Activated CD4-positive, alpha-beta T cell treated with anti-CD3 and anti-CD28 coated beads for 36 hours (primary cell): ENCODE measurements at regions of chr7 and their contacts with region 1.

Region 1: DNA sequence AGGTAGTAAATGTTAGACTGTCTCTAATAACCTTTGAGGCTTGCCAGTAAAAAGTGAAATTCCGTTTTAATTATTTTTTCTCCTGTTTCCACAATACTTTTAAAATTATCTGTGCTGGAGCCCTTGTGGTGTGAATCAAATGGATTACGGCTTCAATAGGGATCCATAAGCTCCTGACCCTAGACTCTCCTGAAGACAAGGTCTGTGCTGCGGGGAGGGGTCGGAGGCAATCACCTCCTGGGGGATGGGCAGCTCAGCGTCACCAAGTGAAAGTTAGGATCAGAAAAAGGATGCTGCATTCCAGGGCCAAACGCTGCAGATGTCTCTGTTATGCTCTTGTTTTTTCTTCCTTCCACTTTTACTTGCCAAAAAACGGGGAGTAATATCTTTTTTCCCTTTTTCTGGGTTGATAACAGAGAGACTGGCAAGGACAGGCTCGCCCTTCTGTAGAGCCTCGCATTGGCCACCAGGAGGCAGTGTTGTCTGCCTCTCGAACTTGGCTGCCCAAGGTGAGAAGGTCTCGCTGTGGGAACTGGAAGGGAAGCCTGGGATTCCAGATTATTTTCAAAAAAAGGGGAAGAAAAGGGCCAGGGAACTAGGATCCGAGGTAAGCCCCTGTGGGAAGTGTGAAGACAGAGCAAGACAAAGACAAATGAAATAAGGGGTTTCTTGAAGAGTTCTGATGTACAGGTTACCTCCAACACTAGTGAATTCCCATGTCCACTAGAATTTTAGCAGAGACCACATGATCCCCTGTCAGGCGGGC is 621.9 kb downstream of the ACTR3B start:
- DNase-seq: peak; percentile 51
- ATAC-seq: no peak
- H3K4me3 Mint-ChIP-seq: no peak overlapping the region
- H3K27ac Mint-ChIP-seq: no peak overlapping the region
- H3K4me1 Mint-ChIP-seq: no peaks in the 10 kb centered on the region
- H3K27me3 Mint-ChIP-seq: peaks cover 4% of the 10 kb centered on the region

Region 2: DNA sequence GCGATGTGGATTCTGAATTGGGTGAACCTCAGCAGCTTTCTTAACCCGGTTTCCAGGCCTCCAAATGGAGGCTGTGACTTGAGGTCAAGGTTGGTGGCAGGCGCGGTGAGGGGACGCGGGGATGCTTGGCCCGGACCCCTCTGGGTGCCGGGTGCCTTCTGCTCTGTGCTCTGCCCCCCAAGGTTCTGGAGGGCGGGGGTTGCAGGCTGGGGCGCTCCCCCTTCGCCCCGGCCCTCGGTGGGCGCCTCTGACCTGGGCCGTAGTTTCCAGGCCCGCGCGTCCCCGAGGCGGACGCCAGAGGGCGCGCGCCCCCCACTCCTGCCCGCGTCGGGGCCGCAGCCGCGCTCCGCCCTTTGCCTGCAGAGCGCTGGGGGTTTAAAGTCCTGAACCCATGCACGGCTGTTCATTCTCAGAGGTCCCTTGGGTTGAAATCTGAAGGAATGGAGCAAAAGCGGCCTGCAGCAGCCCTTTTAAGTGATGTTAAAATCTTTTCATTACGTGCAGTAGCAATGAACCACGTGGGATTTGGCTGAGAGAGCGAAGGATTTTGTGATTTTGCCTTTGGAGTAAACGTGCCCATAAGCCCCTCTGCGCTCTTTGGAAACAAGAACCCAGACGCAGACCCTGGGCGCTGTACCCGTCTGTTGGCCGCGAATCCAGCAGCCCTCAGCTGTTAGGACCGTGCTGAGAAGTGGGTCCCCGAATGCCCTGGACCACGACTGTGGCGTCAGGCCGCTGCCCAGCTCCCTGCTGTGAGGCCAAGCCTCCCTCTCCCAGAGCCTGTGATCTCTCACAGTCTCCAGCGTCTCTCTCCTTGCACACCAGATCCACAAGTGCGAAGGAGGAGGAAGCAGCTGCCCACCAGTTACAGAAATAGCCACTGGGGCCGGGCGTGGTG is 486.9 kb before region 1 on chr7:
- CTCF ChIA-PET with region 1: no interaction called
- POLR2A ChIA-PET with region 1: no interaction called
- intact Hi-C with region 1: loop called in 1 of 2 experiments (anchors 10 kb)
- DNase-seq: peak; percentile 48
- ATAC-seq: peak; percentile 58
- H3K4me3 Mint-ChIP-seq: no peak overlapping the region
- H3K27ac Mint-ChIP-seq: no peak overlapping the region
- H3K4me1 Mint-ChIP-seq: no peaks in the 10 kb centered on the region
- H3K27me3 Mint-ChIP-seq: peaks cover 9% of the 10 kb centered on the region

Region 3: DNA sequence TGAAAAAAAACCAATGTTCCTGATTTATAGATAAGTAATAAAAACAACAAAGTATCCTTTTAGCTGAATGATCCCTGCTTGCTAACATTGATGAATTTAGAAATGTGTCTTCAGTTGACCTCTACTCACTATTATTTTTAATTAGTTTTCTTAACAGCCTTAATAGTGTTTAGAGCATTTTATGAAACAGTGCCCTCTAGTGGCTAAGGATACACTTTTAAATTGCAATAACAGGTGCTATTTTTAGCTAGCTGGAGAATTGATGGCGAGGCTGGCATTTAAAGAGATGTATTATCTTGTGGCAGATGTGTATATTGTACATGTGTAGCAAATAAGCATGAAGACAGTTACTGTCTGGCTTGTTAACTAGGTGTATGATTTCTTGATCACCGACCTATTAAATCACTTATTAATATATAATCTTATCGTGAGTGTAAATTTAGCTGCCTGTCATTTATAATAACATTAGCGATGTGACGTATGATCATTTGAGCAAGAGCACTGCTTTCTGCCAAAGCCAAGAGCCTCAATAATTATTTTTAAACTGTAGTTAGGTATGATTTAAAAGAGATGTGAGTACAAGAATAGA is 1122.6 kb after region 1 on chr7:
- CTCF ChIA-PET with region 1: interaction called, 3 read pairs
- POLR2A ChIA-PET with region 1: no interaction called
- intact Hi-C with region 1: loop called in 1 of 2 experiments (anchors 10 kb)
- DNase-seq: no peak
- ATAC-seq: no peak
- H3K4me3 Mint-ChIP-seq: no peak overlapping the region
- H3K27ac Mint-ChIP-seq: no peak overlapping the region
- H3K4me1 Mint-ChIP-seq: no peaks in the 10 kb centered on the region
- H3K27me3 Mint-ChIP-seq: no peaks in the 10 kb centered on the region